ENCODE measurements at regions of chr10 and their contacts with region 1.

Region 1: DNA sequence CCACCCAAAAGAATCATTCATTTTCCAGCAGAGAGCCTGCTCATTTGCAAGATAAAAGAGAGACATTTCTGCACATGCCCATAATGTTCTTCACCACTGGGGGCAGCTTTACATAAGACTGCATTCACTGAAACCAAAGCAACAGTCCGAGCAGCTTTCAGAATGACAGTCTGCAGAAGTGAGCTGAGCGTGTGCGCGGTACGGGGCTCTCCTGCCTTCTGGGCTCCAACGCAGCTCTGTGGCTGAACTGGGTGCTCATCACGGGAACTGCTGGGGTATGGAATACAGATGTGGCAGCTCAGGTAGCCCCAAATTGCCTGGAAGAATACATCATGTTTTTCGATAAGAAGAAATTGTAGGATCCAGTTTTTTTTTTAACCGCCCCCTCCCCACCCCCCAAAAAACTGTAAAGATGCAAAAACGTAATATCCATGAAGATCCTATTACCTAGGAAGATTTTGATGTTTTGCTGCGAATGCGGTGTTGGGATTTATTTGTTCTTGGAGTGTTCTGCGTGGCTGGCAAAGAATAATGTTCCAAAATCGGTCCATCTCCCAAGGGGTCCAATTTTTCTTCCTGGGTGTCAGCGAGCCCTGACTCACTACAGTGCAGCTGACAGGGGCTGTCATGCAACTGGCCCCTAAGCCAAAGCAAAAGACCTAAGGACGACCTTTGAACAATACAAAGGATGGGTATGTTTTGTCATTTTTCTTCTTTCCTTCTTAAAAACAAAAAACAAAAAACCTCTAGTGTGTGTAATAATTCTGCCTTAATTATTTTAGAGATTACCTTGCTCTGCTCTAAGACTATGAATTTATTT is at the start of gene LRRTM3:
- DNase-seq: peak; percentile 53 to 95 (median 72)

Region 2: DNA sequence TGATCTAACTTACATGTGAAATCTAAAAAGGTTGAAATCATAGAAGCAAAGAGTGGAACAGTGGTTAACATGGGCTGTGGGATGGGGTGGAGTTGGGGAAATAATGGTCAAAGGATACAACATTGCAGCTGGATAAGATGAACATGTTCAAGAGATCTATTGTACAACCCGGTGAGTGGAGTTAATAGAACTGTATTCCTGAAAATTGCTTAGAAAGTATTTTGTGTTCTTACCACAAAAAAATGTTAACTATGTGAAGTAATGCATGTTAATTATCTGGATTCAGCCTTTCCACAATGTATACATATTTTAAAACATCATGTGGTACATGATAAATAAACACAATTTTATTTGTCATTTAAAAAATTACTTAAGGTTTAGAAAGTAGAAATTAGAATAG is 271.2 kb before region 1 on chr10:
- intact Hi-C with region 1: no loop called
- DNase-seq: no peak

Region 3: GRCh38 chr10:66714741-66715140 is 211.4 kb before region 1 on chr10:
- intact Hi-C with region 1: no loop called
- DNase-seq: no peak

Region 4: GRCh38 chr10:66783316-66783715 is 142.8 kb before region 1 on chr10:
- intact Hi-C with region 1: no loop called
- DNase-seq: no peak

Region 5: GRCh38 chr10:66827353-66827752 is 98.8 kb before region 1 on chr10:
- intact Hi-C with region 1: no loop called
- DNase-seq: no peak

Region 6: DNA sequence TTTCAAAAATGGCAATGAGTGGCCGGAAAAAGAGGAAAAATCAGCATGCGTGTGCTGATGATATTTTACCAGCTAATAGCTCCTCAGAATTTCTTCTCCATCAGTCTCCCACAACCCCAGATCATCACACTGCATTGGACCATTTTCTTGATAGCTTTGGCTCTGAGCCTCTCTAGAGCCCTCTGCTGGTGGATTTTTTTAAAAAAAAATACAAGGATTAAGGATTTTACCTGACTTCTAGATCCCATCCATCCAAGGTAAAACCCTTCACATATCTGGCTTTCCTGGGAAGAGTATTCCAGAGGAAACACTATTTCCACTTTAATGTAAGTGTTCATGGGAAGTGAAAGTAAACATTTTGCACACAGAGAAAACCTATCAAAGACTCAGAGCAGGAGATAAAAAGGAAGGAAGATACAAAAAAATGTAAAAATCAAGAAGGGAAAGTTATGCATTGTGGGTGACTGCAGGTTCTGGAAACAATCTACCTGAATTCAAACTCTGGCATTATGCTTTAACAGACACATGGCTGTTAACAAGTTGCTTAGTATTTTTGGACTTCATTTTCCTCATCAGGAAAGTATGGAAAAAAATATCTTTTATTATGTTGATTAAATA is 380.6 kb after region 1 on chr10:
- intact Hi-C with region 1: loop called (anchors 5 kb)
- DNase-seq: no peak

Region 7: GRCh38 chr10:67520924-67521520 is 594.9 kb after region 1 on chr10:
- intact Hi-C with region 1: loop called (anchors 5 kb)
- DNase-seq: peak in 5 of 10 donors; percentile 38 to 78 (median 51)

Region 8: GRCh38 chr10:67666416-67667034 is 740.4 kb after region 1 on chr10:
- intact Hi-C with region 1: loop called (anchors 5 kb)
- DNase-seq: no peak